ENCODE measurements at regions of chr15 and their contacts with region 1.

Region 1: GRCh38 chr15:29070449-29071231 is 184.9 kb downstream of the APBA2 start:
- DNase-seq: no peak
- H3K4me3 ChIP-seq: no peak overlapping the region
- H3K27ac ChIP-seq: no peak overlapping the region
- H3K4me1 ChIP-seq: peaks cover 5% of the 10 kb centered on the region
- H3K27me3 ChIP-seq: no peaks in the 10 kb centered on the region
- CTCF ChIP-seq: no peak
- POLR2A ChIP-seq: no peak

Region 2: DNA sequence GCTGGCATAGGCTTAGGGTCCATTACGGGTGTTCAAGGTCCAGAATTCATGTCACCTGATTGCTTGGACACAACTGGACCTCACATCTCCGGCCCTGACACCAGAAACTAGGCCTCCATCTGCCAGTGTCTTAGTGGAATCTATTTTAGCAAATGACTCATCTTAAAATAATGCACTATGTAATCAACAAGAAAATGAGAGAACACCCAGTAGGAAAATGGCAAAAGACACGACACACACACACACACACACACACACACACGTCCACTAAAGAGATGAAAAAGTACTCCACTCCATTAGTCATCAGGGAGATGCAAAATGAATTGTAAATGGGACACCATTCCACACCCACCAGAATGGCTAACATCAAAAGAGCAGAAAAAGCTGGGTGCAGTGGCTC is 173.7 kb before region 1 on chr15:
- CTCF ChIA-PET with region 1: no interaction called
- POLR2A ChIA-PET with region 1: no interaction called
- dilution Hi-C with region 1: no loop called
- intact Hi-C with region 1: no loop called
- DNase-seq: peak; percentile 14
- H3K4me3 ChIP-seq: no peak overlapping the region
- H3K27ac ChIP-seq: peak overlapping the region; percentile 39
- H3K4me1 ChIP-seq: no peaks in the 10 kb centered on the region
- H3K27me3 ChIP-seq: no peaks in the 10 kb centered on the region
- CTCF ChIP-seq: no peak
- POLR2A ChIP-seq: no peak

Region 3: GRCh38 chr15:29018120-29018805 is 52.4 kb before region 1 on chr15:
- CTCF ChIA-PET with region 1: no interaction called
- POLR2A ChIA-PET with region 1: no interaction called
- dilution Hi-C with region 1: no loop called
- intact Hi-C with region 1: loop called (anchors 10 kb)
- DNase-seq: no peak
- H3K4me3 ChIP-seq: no peak overlapping the region
- H3K27ac ChIP-seq: no peak overlapping the region
- H3K4me1 ChIP-seq: no peaks in the 10 kb centered on the region
- H3K27me3 ChIP-seq: no peaks in the 10 kb centered on the region
- CTCF ChIP-seq: no peak
- POLR2A ChIP-seq: no peak